CD8-positive, alpha-beta T cell (primary cell): ENCODE measurements at regions of chr19 and their contacts with region 1.

Region 1: DNA sequence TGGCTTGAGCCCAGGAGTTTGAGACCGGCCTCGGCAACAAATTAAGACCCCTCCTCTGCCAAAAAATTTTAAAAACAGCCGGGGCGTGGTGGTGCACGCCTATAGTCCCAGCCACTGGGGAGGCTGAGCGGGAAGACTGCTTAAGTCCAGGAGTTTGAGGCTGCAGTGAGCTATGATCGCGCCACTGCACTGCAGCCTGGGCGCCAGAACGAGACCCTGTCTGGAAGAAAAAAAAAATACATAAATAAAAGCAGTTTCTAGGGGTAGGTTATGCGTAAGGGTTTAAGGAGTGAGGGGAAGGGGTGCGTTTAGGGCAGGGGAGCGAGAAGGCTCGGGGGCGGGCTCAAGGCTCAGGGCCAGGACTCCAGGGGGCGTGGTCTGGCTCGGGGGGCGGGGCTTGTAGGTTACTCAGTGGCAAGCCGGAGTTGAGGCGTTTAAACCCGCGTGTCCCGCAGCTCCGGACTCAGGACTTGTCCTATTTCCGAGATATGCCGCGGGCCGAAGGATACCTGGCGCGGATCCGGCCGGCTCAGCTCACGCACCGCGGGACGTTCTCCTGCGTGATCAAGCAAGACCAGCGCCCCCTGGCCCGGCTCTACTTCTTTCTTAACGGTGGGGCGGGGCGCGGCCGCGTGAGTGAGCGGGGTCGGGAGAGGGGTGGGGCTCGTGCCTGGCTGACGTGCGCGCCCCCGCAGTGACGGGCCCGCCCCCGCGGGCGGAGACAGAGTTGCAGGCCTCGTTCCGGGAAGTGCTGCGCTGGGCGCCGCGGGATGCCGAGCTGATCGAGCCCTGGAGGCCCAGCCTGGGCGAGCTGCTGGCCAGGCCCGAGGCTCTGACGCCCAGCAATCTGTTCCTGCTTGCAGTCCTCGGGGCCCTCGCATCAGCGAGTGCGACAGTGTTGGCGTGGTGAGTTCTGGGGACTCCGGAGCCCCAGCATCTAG is 10.7 kb downstream of the SPACA6 start:
- DNase-seq: peak; percentile 91 to 99 (median 97)
- ATAC-seq: peak; percentile 91
- H3K4me3 ChIP-seq: peak overlapping the region; percentile 89 to 98
- H3K4me3 Mint-ChIP-seq: peak overlapping the region; percentile 89
- H3K27ac ChIP-seq: peak overlapping the region; percentile 88 to 92
- H3K27ac Mint-ChIP-seq: peak overlapping the region; percentile 89
- H3K4me1 ChIP-seq: peaks cover 25% of the 10 kb centered on the region
- H3K4me1 Mint-ChIP-seq: peaks cover 35% of the 10 kb centered on the region
- H3K27me3 ChIP-seq: no peaks in the 10 kb centered on the region
- H3K27me3 Mint-ChIP-seq: no peaks in the 10 kb centered on the region
- CTCF ChIP-seq: peak; percentile 56

Region 2: DNA sequence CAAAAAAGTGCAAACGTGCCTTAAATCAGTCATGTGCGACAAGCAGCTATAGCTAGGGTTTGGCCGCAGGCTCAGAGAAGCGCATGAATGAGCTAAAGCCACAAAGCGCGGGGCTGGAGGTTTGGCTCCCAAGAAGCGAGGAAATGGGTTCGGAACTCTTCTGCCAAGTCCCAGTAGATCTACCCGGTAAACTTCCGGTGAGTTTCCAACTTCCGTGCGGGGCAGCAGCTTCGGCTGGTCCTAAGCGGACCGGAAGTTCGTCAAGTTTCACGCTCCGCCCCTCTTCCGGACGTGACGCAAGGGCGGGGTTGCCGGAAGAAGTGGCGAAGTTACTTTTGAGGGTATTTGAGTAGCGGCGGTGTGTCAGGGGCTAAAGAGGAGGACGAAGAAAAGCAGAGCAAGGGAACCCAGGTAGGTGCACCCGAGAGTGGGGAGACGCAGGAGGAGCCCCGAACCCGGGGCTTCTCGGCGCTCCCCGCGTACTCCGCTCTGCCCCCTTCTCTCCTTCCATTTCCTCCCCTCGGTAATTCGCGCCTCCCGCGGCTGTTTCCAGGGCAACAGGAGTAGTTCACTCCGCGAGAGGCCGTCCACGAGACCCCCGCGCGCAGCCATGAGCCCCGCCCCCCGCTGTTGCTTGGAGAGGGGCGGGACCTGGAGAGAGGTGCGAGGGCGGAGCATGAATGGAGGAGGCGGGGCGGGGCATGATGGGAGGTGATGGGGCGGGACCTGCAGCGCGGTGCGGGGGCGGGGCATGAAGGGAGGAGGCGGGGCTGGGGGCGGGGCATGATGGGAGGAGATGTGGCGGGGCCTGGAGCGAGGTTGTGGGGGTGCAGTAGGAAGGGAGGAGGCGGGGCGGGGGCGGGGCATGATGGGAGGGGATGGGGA is 1327.4 kb before region 1 on chr19 and contains the start of gene NR1H2:
- CTCF ChIA-PET with region 1: no interaction called
- POLR2A ChIA-PET with region 1: no interaction called
- intact Hi-C with region 1: loop called in 1 of 2 experiments (anchors 5 kb)
- DNase-seq: peak; percentile 89 to 99 (median 95)
- ATAC-seq: peak; percentile 90
- H3K4me3 ChIP-seq: peak within 1 kb of the TSS; percentile 73 to 93
- H3K4me3 Mint-ChIP-seq: peak within 1 kb of the TSS; percentile 99
- H3K27ac ChIP-seq: peak within 1 kb of the TSS; percentile 99 to 100
- H3K27ac Mint-ChIP-seq: peak within 1 kb of the TSS; percentile 100
- H3K4me1 ChIP-seq: peaks cover 11% of the 10 kb centered on the region
- H3K4me1 Mint-ChIP-seq: peaks cover 22% of the 10 kb centered on the region
- H3K27me3 ChIP-seq: no peaks in the 10 kb centered on the region
- H3K27me3 Mint-ChIP-seq: no peaks in the 10 kb centered on the region
- CTCF ChIP-seq: no peak
- total RNA-seq, gene NR1H2: 320 to 327 TPM

Region 3: DNA sequence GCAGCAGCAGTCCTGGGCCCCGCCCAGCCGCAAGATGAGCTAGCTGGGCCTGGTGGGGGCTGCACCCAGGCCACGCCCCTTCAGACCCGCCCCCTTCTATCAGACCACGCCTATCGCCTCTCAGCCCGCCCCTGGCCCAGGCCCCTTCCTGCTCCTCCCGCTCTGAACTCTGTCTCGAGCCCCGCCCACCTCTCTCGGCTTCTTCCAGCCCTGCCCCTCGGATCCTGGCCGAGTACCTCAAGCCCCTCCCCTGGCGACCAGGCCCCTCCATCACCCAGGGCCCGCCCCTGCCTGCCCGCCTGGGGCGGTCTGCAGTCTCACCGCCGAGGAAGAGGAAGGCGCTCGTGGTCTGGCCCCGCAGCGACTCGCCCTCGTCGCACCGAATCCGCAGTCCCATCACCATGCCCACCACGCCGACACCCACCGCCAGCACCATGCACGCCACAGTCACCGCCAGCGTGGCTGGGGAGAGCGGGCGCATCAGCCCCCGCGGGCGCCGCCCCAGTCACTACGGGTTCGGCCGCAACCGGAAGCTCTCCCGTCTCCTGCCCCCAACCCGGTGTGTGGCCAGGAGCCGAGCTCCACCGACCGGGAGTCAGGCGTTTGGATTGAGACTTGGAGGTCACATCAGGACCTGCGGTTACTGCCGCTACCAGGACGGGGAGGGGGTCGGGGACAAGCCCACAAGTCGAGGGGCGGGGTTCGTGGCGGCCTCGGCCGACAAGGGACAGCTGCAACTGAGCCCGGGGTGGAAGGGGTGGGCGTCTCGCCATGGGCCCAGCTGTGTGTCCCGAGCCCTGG is 336.1 kb before region 1 on chr19:
- CTCF ChIA-PET with region 1: no interaction called
- POLR2A ChIA-PET with region 1: no interaction called
- intact Hi-C with region 1: loop called (anchors 2 to 10 kb)
- DNase-seq: peak; percentile 88 to 98 (median 95)
- ATAC-seq: peak; percentile 78
- H3K4me3 ChIP-seq: peak overlapping the region; percentile 74 to 77
- H3K4me3 Mint-ChIP-seq: peak overlapping the region; percentile 98
- H3K27ac ChIP-seq: peak overlapping the region; percentile 48 to 87
- H3K27ac Mint-ChIP-seq: peak overlapping the region; percentile 96
- H3K4me1 ChIP-seq: peaks cover 61% of the 10 kb centered on the region
- H3K4me1 Mint-ChIP-seq: peaks cover 72% of the 10 kb centered on the region
- H3K27me3 ChIP-seq: no peaks in the 10 kb centered on the region
- H3K27me3 Mint-ChIP-seq: no peaks in the 10 kb centered on the region
- CTCF ChIP-seq: no peak

Region 4: GRCh38 chr19:51593969-51594773 is 109.7 kb before region 1 on chr19:
- CTCF ChIA-PET with region 1: no interaction called
- POLR2A ChIA-PET with region 1: no interaction called
- intact Hi-C with region 1: loop called (anchors 1 kb)
- DNase-seq: peak; percentile 86 to 97 (median 96)
- ATAC-seq: peak; percentile 100
- H3K4me3 ChIP-seq: peak overlapping the region; percentile 69 to 98
- H3K4me3 Mint-ChIP-seq: peak overlapping the region; percentile 99
- H3K27ac ChIP-seq: peak overlapping the region; percentile 50 to 73
- H3K27ac Mint-ChIP-seq: peak overlapping the region; percentile 87
- H3K4me1 ChIP-seq: peaks cover 18% of the 10 kb centered on the region
- H3K4me1 Mint-ChIP-seq: peaks cover 27% of the 10 kb centered on the region
- H3K27me3 ChIP-seq: no peaks in the 10 kb centered on the region
- H3K27me3 Mint-ChIP-seq: peaks cover 10% of the 10 kb centered on the region
- CTCF ChIP-seq: no peak

Region 5: GRCh38 chr19:51690454-51691073 is 13.3 kb before region 1 on chr19:
- CTCF ChIA-PET with region 1: interaction called, 3 read pairs
- POLR2A ChIA-PET with region 1: interaction called, 5 read pairs
- intact Hi-C with region 1: loop called (anchors 1 kb)
- DNase-seq: peak; percentile 23 to 79 (median 53)
- ATAC-seq: peak; percentile 83
- H3K4me3 ChIP-seq: peak overlapping the region; percentile 46 to 72
- H3K4me3 Mint-ChIP-seq: peak overlapping the region; percentile 80
- H3K27ac ChIP-seq: peak overlapping the region; percentile 65 to 67
- H3K27ac Mint-ChIP-seq: peak overlapping the region; percentile 45
- H3K4me1 ChIP-seq: peaks cover 15% of the 10 kb centered on the region
- H3K4me1 Mint-ChIP-seq: peaks cover 12% of the 10 kb centered on the region
- H3K27me3 ChIP-seq: peaks cover 0 to 16% of the 10 kb centered on the region in 2 experiments
- H3K27me3 Mint-ChIP-seq: peaks cover 3% of the 10 kb centered on the region
- CTCF ChIP-seq: no peak

Region 6: GRCh38 chr19:51754109-51754508 is 50.3 kb after region 1 on chr19:
- CTCF ChIA-PET with region 1: no interaction called
- POLR2A ChIA-PET with region 1: no interaction called
- intact Hi-C with region 1: no loop called
- DNase-seq: peak in 1 of 9 experiments; percentile 9
- ATAC-seq: no peak
- H3K4me3 ChIP-seq: no peak overlapping the region
- H3K4me3 Mint-ChIP-seq: no peak overlapping the region
- H3K27ac ChIP-seq: no peak overlapping the region
- H3K27ac Mint-ChIP-seq: no peak overlapping the region
- H3K4me1 ChIP-seq: no peaks in the 10 kb centered on the region
- H3K4me1 Mint-ChIP-seq: no peaks in the 10 kb centered on the region
- H3K27me3 ChIP-seq: no peaks in the 10 kb centered on the region
- H3K27me3 Mint-ChIP-seq: peaks cover 14% of the 10 kb centered on the region
- CTCF ChIP-seq: no peak